ENCODE measurements at regions of chrX and their contacts with region 1.

Region 1: GRCh38 chrX:6238576-6238975 is 9.9 kb upstream of the NLGN4X start:
- DNase-seq: no peak
- H3K4me3 ChIP-seq: no peak overlapping the region
- H3K27ac ChIP-seq: no peak overlapping the region
- H3K4me1 ChIP-seq: no peaks in the 10 kb centered on the region
- H3K27me3 ChIP-seq: no peaks in the 10 kb centered on the region
- CTCF ChIP-seq: no peak

Region 2: GRCh38 chrX:6169407-6169806 is 69.2 kb before region 1 on chrX:
- CTCF ChIA-PET with region 1: no interaction called
- dilution Hi-C with region 1: loop called (anchors 5 kb)
- in situ Hi-C with region 1: no loop called
- intact Hi-C with region 1: no loop called
- DNase-seq: no peak
- H3K4me3 ChIP-seq: no peak overlapping the region
- H3K27ac ChIP-seq: no peak overlapping the region
- H3K4me1 ChIP-seq: no peaks in the 10 kb centered on the region
- H3K27me3 ChIP-seq: no peaks in the 10 kb centered on the region
- CTCF ChIP-seq: no peak